HepG2 (cell line): ENCODE measurements at regions of chr4 and their contacts with region 1.

Region 1: GRCh38 chr4:76615999-76616398 is 181.0 kb downstream of the SHROOM3 start:
- DNase-seq: no peak
- ATAC-seq: no peak
- H3K4me3 ChIP-seq: no peak overlapping the region
- H3K27ac ChIP-seq: no peak overlapping the region
- H3K4me1 ChIP-seq: no peaks in the 10 kb centered on the region
- H3K27me3 ChIP-seq: 0 out of 5 replicates have a peak, but pooled peaks cover 0 to 4% of the 10 kb centered on the region in 2 experiments
- CTCF ChIP-seq: no peak
- EP300 ChIP-seq: no peak
- POLR2A ChIP-seq: no peak
- RAD21 ChIP-seq: no peak

Region 2: DNA sequence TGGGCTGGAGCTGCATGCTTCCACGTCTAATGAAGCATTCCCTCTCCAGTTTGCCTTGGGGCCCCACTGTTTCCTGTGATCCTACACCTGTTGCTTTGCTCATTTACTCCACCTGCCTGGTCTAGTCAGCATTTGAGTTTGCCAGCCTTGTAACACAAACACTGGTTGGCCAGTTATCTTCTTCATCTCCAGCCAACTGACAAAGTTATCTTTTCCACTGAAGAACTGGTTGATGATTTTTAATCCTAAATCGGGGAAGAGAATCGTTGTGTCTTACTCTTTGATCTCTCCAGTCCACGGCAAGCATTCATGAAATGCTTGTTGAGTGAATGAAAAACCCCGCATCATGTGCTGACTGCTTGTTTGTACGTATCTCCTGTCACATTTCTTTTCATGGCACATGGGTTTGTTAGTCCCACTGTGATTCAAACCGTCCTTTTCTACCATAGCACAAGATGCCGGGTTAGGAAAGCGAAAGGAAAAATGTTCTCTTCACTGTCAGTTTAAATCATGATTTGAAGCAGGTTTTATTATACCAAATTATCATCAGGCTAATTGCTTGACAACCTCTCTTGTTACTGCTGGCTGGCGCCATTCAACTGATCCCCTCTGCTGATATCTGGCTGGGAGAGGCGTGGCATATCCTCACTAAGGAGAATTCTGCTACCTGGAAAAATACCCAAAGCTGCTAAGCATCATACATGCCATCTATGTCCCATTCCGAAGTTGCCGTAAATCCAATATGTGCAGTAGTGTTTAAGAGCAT is 36.2 kb before region 1 on chr4:
- CTCF ChIA-PET with region 1: no interaction called
- POLR2A ChIA-PET with region 1: no interaction called
- in situ Hi-C with region 1: no loop called
- intact Hi-C with region 1: loop called (anchors 2 kb)
- DNase-seq: no peak
- ATAC-seq: no peak
- H3K4me3 ChIP-seq: no peak overlapping the region
- H3K27ac ChIP-seq: no peak overlapping the region
- H3K4me1 ChIP-seq: no peaks in the 10 kb centered on the region
- H3K27me3 ChIP-seq: peaks cover 0 to 4% of the 10 kb centered on the region in 2 experiments; a peak in 2 of 5 replicates
- CTCF ChIP-seq: no peak
- EP300 ChIP-seq: no peak
- POLR2A ChIP-seq: no peak
- RAD21 ChIP-seq: no peak